IMR-90 (cell line): ENCODE measurements at regions of chr6 and their contacts with region 1.

Region 1: GRCh38 chr6:21593412-21593926 is at the start of gene SOX4:
- DNase-seq: peak; percentile 98
- ATAC-seq: peak; percentile 79
- H3K4me3 ChIP-seq: peak within 1 kb of the TSS; percentile 84
- H3K27ac ChIP-seq: peak within 1 kb of the TSS; percentile 90
- H3K4me1 ChIP-seq: no peaks in the 10 kb centered on the region
- H3K27me3 ChIP-seq: no peaks in the 10 kb centered on the region
- CTCF ChIP-seq: no peak
- POLR2A ChIP-seq: peak; percentile 98
- RAD21 ChIP-seq: no peak; the same call in 1 of the 2 replicates
- total RNA-seq, gene SOX4: 4.7 and 6.4 TPM in 2 replicates

Region 2: DNA sequence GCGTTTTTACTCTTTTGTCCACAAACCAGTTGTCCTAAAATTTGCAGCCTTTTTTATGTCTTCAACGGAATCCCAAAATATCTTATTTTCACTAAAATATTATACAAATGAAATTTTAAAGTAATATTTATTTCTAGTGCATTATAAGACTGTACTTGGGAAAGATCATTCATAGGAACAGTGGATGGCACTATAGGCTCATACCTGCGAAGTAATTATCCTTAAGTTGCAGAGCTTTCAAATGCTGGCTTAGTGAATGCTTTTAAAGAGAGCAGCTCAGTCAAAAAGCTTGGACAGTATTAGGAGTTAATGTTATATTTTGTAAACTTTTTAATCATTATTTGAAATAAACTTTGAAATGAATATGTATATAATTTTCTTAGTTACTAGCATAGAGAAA is 804.3 kb before region 1 on chr6:
- CTCF ChIA-PET with region 1: no interaction called
- POLR2A ChIA-PET with region 1: no interaction called
- dilution Hi-C with region 1: no loop called
- in situ Hi-C with region 1: no loop called
- intact Hi-C with region 1: loop called (anchors 1 kb)
- DNase-seq: peak; percentile 44
- ATAC-seq: no peak
- H3K4me3 ChIP-seq: no peak overlapping the region
- H3K27ac ChIP-seq: no peak overlapping the region
- H3K4me1 ChIP-seq: no peaks in the 10 kb centered on the region; the same call in 1 of the 2 replicates
- H3K27me3 ChIP-seq: no peaks in the 10 kb centered on the region
- CTCF ChIP-seq: peak; percentile 39
- POLR2A ChIP-seq: no peak
- RAD21 ChIP-seq: peak; percentile 51

Region 3: DNA sequence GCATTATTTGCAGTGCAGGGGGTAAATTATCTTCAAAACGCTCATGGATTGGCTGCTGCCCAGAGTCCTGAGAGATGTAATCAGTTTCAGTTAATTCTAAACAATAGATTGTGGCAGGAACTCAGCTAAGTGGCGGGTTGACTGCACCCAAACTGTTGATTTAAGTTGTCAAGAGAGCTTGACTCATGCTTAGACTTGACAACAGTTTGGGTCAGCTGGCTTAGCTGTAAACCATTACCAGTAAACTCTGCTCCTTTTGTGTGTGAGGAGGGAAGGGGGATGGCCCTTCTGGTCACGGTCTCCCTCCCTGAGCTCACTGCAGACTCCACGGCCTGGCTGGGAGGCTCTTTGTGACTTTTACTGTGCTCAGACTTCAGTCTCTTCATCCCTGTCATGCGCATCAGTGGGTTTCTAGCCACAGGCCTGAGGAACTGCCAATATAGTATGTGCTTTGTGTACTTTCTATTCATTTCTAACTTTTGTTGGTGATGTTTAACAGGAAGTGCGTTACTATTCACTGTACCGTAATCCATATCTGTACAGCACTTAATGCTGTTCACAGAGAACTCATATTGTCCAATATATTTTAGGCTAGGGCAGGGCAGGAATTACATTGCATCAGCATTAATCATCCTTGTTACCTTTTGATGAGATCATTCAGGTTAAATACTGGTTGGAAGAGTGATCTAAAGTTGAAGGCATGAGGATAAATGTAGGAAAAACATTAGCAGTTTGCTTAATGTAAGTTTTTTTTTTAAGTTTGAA is 570.9 kb before region 1 on chr6:
- CTCF ChIA-PET with region 1: interaction called, 5 read pairs
- POLR2A ChIA-PET with region 1: no interaction called
- dilution Hi-C with region 1: no loop called
- in situ Hi-C with region 1: no loop called
- intact Hi-C with region 1: loop called (anchors 1 kb)
- DNase-seq: peak; percentile 82
- ATAC-seq: peak; percentile 94
- H3K4me3 ChIP-seq: no peak overlapping the region
- H3K27ac ChIP-seq: peak overlapping the region; percentile 80; the same call in 1 of the 2 replicates
- H3K4me1 ChIP-seq: peaks cover 2% of the 10 kb centered on the region; the same call in 1 of the 2 replicates
- H3K27me3 ChIP-seq: no peaks in the 10 kb centered on the region
- CTCF ChIP-seq: no peak
- POLR2A ChIP-seq: no peak
- RAD21 ChIP-seq: no peak

Region 4: GRCh38 chr6:21722510-21722909 is 129.0 kb after region 1 on chr6:
- CTCF ChIA-PET with region 1: no interaction called
- POLR2A ChIA-PET with region 1: interaction called, 12 read pairs
- dilution Hi-C with region 1: no loop called
- in situ Hi-C with region 1: no loop called
- intact Hi-C with region 1: no loop called
- DNase-seq: no peak
- ATAC-seq: no peak
- H3K4me3 ChIP-seq: no peak overlapping the region
- H3K27ac ChIP-seq: no peak overlapping the region
- H3K4me1 ChIP-seq: 0 out of 2 replicates have a peak, but pooled peaks cover 2% of the 10 kb centered on the region
- H3K27me3 ChIP-seq: no peaks in the 10 kb centered on the region
- CTCF ChIP-seq: no peak
- POLR2A ChIP-seq: no peak
- RAD21 ChIP-seq: no peak

Region 5: GRCh38 chr6:21885532-21886114 is 292.2 kb after region 1 on chr6:
- CTCF ChIA-PET with region 1: no interaction called
- POLR2A ChIA-PET with region 1: no interaction called
- dilution Hi-C with region 1: no loop called
- in situ Hi-C with region 1: no loop called
- intact Hi-C with region 1: loop called (anchors 5 kb)
- DNase-seq: peak; percentile 85
- ATAC-seq: peak; percentile 80
- H3K4me3 ChIP-seq: no peak overlapping the region
- H3K27ac ChIP-seq: peak overlapping the region; percentile 67; the same call in 1 of the 2 replicates
- H3K4me1 ChIP-seq: peaks cover 12% of the 10 kb centered on the region
- H3K27me3 ChIP-seq: no peaks in the 10 kb centered on the region
- CTCF ChIP-seq: no peak
- POLR2A ChIP-seq: no peak
- RAD21 ChIP-seq: 0 out of 2 replicates have a peak, but pooled peaks have one; percentile 1

Region 6: GRCh38 chr6:22145823-22146677 is 552.6 kb after region 1 on chr6:
- CTCF ChIA-PET with region 1: interaction called, 3 read pairs
- POLR2A ChIA-PET with region 1: interaction called, 36 read pairs
- dilution Hi-C with region 1: no loop called
- in situ Hi-C with region 1: loop called (anchors 10 kb)
- intact Hi-C with region 1: loop called (anchors 1 kb)
- DNase-seq: peak; percentile 78
- ATAC-seq: peak; percentile 12; the same call in 1 of the 2 replicates
- H3K4me3 ChIP-seq: no peak overlapping the region
- H3K27ac ChIP-seq: peak overlapping the region; percentile 95
- H3K4me1 ChIP-seq: peaks cover 24% of the 10 kb centered on the region
- H3K27me3 ChIP-seq: no peaks in the 10 kb centered on the region
- CTCF ChIP-seq: peak; percentile 43
- POLR2A ChIP-seq: no peak
- RAD21 ChIP-seq: 0 out of 2 replicates have a peak, but pooled peaks have one; percentile 35

Region 7: DNA sequence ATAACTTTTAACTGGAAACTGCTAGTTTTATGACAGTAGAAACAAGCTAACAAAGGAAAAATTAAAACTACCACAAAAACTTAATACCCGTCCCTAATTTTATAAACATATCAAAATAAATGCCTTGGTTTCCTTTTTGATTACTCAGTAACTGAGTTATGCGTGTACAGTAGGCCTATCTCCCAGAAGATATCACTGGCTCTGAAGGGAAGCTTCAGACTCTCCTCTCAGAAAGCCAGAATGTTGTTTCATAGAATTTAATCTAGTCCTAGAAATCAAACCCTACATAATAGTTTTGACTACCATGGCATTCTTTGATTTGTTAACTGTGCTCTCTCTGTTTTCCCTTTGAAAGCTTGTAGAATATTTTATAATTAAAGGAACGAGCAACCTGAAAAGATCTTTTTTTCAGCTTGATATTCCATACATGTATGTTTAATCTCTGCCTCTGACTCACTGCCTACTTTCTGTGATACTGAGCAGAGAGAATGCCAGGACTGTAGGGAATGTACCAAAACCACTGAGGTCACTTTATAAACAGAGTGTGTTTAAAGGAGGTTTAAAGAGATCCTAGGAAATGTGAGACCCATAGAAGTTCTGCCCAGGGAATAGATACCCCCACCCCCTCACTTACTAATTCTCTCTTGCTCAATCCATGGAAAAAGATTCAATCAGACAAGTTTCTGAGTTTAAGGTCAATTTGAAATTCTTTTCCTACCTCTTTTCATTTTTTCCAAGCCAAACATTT is 1287.4 kb after region 1 on chr6:
- CTCF ChIA-PET with region 1: no interaction called
- POLR2A ChIA-PET with region 1: no interaction called
- dilution Hi-C with region 1: no loop called
- in situ Hi-C with region 1: no loop called
- intact Hi-C with region 1: loop called (anchors 1 kb)
- DNase-seq: peak; percentile 99
- ATAC-seq: peak; percentile 91
- H3K4me3 ChIP-seq: no peak overlapping the region
- H3K27ac ChIP-seq: peak overlapping the region; percentile 100; the same call in 1 of the 2 replicates
- H3K4me1 ChIP-seq: peaks cover 16% of the 10 kb centered on the region
- H3K27me3 ChIP-seq: no peaks in the 10 kb centered on the region
- CTCF ChIP-seq: no peak
- POLR2A ChIP-seq: peak; percentile 23; the same call in 1 of the 2 replicates
- RAD21 ChIP-seq: peak; percentile 30